HEK293T (cell line): ENCODE measurements at regions of chr15 and their contacts with region 1.

Region 1: DNA sequence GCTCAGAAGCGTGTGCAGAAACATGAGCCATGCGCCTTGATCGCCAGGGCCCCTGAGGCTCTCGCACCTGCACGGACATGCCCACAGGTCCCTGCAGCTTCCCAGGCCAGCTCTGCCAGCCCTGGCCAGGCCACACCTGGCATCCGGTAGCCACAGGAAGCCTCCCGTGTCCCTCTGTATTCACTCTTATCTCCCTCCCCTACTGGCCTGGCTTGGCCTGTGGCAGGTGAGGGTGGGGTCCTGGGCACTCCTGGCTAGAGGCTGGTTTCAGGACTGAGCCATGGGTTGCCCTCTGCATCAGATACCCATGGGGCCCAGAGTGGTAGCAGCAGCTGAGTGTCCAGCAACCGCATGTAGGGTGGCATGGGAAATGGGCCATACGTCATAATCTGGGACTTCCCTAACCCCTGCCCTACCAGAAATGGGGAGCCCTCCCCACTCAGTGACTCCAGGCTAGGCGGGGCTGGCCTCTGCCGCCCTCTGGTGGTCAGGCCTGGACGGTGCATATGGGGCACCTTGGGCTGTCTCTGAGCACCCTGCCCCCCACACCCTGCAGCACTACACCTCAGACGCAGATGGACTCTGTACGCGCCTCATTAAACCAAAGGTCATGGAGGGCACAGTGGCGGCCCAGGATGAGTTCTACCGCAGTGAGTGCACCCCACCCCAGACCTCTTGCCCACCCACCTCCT is 12.6 kb upstream of the LMAN1L start:
- DNase-seq: peak; percentile 93

Region 2: GRCh38 chr15:74787251-74788041 is 12.6 kb before region 1 on chr15:
- CTCF ChIA-PET with region 1: interaction called, 11 read pairs
- POLR2A ChIA-PET with region 1: interaction called, 4 read pairs
- DNase-seq: peak; percentile 81

Region 3: DNA sequence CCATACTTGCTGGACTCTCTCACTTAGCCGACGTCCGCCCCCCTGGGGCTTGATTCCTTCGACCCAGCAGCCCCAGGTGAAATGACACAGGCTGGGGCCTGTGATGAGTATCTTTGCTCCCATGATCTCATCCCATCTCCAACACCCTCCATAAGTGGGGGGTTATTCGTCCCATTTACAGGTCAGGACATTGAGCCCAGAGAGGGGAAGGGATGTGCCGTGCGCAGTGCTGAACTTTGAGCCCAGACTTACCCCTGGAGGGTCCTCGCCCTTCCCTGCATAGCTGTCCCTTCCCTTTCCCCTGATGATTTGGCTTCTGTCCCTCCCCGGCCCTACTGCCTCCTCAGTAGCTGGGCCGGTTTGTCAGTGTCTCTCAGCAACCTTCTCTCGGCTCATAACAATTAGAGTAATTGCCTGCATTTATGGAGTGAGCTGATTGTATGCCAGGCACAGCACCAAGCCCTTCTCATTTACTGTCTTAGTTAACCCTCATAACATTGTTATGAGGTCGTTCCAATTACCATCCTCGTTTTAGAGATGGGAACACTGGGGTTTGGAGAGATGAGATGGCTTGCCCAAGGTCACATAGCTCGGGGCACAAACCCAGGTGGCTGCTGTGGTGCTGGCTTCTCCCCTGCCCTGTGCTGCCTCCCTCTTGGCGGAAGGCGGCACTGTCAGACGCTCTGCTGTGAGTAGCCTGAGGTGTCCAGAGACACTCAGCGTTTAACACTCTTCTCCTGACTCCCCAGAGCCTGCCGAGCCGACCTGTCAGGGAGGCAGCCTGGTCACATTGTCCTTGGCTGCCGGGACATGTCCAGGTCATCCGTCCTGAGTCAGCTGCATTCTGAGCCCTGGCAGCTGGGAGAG is 17.0 kb after region 1 on chr15:
- CTCF ChIA-PET with region 1: no interaction called
- POLR2A ChIA-PET with region 1: no interaction called
- DNase-seq: no peak